Right ventricle myocardium inferior (tissue), 1 donor: ENCODE measurements at regions of chr19 and their contacts with region 1.

Region 1: DNA sequence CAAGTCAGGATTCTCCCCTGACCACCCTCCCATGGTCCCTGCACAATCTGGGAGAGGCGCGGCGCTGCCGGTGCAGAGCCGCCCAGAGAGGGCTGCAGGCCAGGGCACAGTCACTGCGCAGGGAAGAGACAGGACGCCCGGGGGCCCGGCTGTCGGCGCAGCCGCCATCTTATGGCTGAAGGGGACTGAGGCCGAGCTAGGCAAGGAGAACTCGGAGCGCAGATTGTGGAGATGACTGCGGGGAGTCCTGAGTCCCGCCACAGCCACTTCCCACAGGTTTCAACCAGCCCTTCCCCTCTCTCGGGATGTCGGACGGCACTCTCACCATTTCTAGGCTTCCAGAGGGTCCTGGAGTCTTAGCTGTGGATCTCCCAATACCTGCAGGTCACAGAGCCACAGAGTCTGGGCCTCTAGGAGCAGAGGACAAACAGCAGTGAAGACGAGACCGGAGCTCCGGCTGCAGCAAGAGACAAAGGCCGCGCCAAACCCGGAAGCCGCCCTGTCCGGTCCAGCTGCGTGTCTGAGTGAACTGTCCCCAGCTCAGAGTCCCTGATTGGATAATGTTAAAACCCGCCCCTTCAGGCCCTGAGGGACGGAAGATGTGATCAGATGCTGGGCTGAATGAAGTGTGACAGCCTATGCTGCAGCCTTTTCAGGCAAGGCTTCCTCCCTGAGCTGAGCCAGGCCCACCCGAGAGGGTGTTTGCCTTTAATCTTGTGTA is at the start of gene ZNF708:
- DNase-seq: peak; percentile 92
- ATAC-seq: peak; percentile 100
- total RNA-seq, gene ZNF708: 4.3 TPM

Region 2: DNA sequence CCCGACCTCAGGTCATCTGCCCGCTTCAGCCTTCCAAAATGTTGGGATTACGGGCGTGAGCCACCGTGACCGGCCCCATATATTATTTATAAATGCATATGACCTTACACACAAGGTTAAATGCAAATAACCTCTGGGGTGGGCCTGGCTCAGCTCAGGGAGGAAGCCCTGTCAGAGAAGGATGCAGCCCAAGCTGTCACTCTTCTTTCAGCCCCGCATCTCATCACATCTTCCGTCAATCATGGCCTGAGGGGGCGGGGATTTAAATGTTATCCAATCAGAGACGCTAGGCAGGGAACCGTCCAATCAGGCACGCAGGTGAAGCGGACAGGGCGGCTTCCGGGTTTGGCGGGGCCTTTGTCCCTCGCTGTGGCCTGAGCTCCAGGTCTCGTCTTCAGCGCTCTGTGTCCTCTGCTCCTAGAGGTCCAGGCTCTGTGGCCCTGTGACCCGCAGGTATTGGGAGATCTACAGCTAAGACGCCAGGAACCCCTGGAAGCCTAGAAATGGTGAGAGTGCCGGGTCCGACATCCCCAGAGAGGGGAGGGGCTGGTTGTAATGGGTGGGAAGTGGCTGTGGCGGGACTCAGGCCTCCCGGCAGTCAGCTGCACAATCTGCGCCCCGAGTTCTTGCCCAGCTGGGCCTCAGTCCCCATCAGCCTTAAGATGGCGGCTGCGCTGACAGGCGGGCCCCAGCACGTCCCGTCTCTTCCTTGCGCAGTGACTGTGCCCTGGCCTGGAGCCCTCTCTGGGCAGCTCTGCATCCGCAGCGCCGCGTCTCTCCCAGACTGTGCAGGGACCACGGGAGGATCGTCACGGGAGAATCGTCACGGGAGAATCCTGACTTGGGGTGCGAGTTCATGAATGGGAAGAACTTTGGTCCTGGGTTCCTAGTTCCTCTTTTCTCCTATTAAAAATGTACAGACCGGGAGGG is 308.5 kb before region 1 on chr19 and contains the start of gene ZNF430:
- intact Hi-C with region 1: loop called (anchors 5 kb)
- DNase-seq: peak; percentile 92
- ATAC-seq: peak; percentile 100
- total RNA-seq, gene ZNF430: 4.0 TPM

Region 3: GRCh38 chr19:21202865-21203494 is 126.1 kb before region 1 on chr19:
- intact Hi-C with region 1: no loop called
- DNase-seq: no peak
- ATAC-seq: peak; percentile 16

Region 4: GRCh38 chr19:21221693-21222092 is 107.4 kb before region 1 on chr19:
- intact Hi-C with region 1: no loop called
- DNase-seq: no peak
- ATAC-seq: no peak

Region 5: DNA sequence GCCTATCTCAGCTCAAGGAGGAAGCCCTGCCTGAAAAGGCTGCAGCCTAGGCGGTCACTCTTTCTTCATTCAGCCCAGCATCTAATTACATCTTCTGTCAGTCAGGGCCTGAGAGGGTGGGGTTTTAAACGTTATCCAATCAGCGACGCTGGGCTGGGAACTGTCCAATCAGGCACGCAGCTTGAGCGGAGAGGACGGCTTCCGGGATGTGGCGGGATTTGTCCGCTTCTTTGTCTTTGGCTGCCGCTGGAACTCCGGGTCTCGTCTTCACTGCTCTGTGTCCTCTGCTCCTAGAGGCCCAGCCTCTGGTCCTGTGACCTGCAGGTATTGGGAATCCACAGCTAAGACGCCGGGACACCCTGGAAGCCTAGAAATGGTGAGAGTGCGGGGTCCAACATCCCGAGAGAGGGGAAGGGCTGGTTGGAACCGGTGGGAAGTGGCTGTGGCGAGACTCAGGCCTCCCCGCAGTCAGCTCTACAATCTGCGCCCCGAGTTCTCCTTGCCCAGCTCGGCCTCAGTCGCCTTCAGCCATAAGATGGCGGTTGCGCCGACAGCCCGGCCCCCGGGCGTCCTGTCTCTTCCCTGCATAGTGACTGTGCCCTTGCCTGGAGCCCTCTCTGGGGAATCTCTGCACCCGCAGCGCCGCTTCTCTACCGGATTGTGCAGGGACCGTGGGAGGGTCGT is 29.9 kb after region 1 on chr19 and contains the start of gene ZNF738:
- intact Hi-C with region 1: loop called (anchors 2 kb)
- DNase-seq: peak; percentile 92
- ATAC-seq: peak; percentile 100
- total RNA-seq, gene ZNF738: 1.8 TPM

Region 6: GRCh38 chr19:21396893-21397572 is 68.0 kb after region 1 on chr19 and contains the start of gene ZNF493:
- intact Hi-C with region 1: loop called (anchors 2 kb)
- DNase-seq: peak; percentile 94
- ATAC-seq: peak; percentile 100
- total RNA-seq, gene ZNF493: 11.1 TPM